GM10248 (cell line): ENCODE measurements at regions of chr14 and their contacts with region 1.

Region 1: DNA sequence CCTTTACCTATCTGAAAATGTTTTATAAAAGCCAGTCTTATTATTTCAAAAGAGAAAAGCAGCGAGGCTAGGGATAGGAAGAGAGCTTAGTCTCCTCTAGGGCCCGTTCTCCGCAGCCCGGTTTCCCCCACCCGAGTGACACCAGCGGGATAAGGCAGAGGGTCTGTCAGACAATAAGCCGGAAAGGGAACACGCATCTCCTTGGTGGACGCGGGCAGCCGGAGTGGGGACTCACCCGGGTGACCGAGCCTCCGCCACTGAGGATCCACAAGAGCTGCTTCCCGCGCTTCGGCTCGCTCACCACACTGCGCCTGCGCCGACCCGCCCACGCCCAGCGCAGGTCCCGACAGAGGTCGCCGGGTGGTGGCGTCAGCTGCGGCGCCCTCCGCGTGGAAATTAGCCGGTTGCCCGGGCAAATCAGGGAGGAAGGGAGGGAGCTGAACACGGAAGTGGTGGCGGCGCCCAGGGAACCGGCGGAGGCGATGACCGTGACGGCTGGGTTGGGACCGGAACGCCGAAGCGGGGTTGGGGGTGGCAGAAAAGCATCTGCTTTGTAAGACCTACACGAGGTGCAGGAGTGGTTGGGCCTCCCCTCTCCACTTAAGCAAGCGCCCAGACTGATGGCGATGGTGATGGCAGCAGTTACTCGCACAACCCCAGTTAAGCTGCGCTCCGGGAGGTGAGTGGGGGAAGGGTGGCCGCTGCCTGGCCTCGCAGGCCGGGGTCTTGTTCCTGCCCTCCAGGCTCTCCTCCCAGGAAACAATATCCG is at the starts of genes SOCS4 and WDHD1:
- DNase-seq: peak; percentile 96
- CTCF ChIP-seq: peak; percentile 8

Region 2: GRCh38 chr14:55015006-55015405 is 12.0 kb before region 1 on chr14:
- CTCF ChIA-PET with region 1: interaction called, 11 read pairs
- POLR2A ChIA-PET with region 1: interaction called, 3 read pairs
- DNase-seq: no peak
- CTCF ChIP-seq: no peak